ENCODE measurements at regions of chr11 and their contacts with region 1.

Region 1: GRCh38 chr11:925496-926321 is at the start of gene AP2A2:
- DNase-seq: peak; percentile 88
- H3K4me3 ChIP-seq: peak within 1 kb of the TSS; percentile 48 to 84 (median 83)
- H3K27ac ChIP-seq: peak within 1 kb of the TSS; percentile 72 to 90 (median 89)
- H3K4me1 ChIP-seq: peaks cover 8 to 16% of the 10 kb centered on the region in 2 donors
- H3K27me3 ChIP-seq: no peaks in the 10 kb centered on the region
- CTCF ChIP-seq: peak; percentile 24 to 98 (median 71)
- POLR2A ChIP-seq: peak in 1 of 2 donors; percentile 78
- total RNA-seq, gene AP2A2: 37.2 to 67.3 (median 54.1) TPM

Region 2: GRCh38 chr11:980438-981371 is 55.0 kb after region 1 on chr11:
- intact Hi-C with region 1: loop called (anchors 10 kb)
- DNase-seq: peak; percentile 66 to 69
- H3K4me3 ChIP-seq: no peak overlapping the region
- H3K27ac ChIP-seq: peak overlapping the region; percentile 44 to 51 (median 50)
- H3K4me1 ChIP-seq: peaks cover 22 to 30% of the 10 kb centered on the region in 2 donors
- H3K27me3 ChIP-seq: no peaks in the 10 kb centered on the region
- CTCF ChIP-seq: peak in 3 of 6 experiments; percentile 30 to 41 (median 36)
- POLR2A ChIP-seq: no peak